ENCODE measurements at regions of chr3 and their contacts with region 1.

Region 1: GRCh38 chr3:52001443-52001974 is 5.8 kb upstream of the RPL29 start:
- DNase-seq: peak; percentile 87
- H3K4me3 Mint-ChIP-seq: no peak overlapping the region
- H3K27ac Mint-ChIP-seq: no peak overlapping the region
- H3K4me1 Mint-ChIP-seq: peaks cover 38% of the 10 kb centered on the region
- H3K27me3 Mint-ChIP-seq: peaks cover 15% of the 10 kb centered on the region
- CTCF ChIP-seq: peak; percentile 98

Region 2: DNA sequence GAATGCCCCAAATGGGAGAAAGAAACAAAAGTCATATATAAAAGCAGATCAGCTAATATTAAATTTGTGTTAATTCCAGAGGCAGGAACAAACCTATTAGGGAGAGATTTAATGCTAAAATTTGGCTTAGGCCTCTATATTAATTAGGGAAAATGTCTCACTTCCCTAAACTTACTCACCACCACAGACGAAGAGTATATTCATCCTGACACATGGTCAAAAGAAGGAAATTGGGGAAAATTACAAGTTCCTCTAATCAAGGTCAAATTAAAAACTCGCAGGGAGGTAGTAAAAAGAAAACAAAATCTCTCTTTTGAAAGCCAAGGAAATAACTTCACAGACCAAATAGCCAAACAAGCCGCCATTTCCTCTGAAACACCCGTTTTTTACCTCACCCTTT is 262.4 kb before region 1 on chr3:
- CTCF ChIA-PET with region 1: no interaction called
- intact Hi-C with region 1: no loop called
- DNase-seq: no peak
- H3K4me3 Mint-ChIP-seq: no peak overlapping the region
- H3K27ac Mint-ChIP-seq: no peak overlapping the region
- H3K4me1 Mint-ChIP-seq: no peaks in the 10 kb centered on the region
- H3K27me3 Mint-ChIP-seq: peaks cover 26% of the 10 kb centered on the region
- CTCF ChIP-seq: no peak

Region 3: GRCh38 chr3:52056968-52057805 is 55.7 kb after region 1 on chr3:
- CTCF ChIA-PET with region 1: interaction called, 4 read pairs
- intact Hi-C with region 1: loop called (anchors 5 kb)
- DNase-seq: peak; percentile 98
- H3K4me3 Mint-ChIP-seq: peak overlapping the region; percentile 80
- H3K27ac Mint-ChIP-seq: peak overlapping the region; percentile 81
- H3K4me1 Mint-ChIP-seq: peaks cover 35% of the 10 kb centered on the region
- H3K27me3 Mint-ChIP-seq: no peaks in the 10 kb centered on the region
- CTCF ChIP-seq: no peak

Region 4: GRCh38 chr3:52123106-52123725 is 121.7 kb after region 1 on chr3:
- CTCF ChIA-PET with region 1: interaction called, 6 read pairs
- intact Hi-C with region 1: loop called (anchors 5 kb)
- DNase-seq: peak; percentile 70
- H3K4me3 Mint-ChIP-seq: no peak overlapping the region
- H3K27ac Mint-ChIP-seq: no peak overlapping the region
- H3K4me1 Mint-ChIP-seq: peaks cover 6% of the 10 kb centered on the region
- H3K27me3 Mint-ChIP-seq: no peaks in the 10 kb centered on the region
- CTCF ChIP-seq: peak; percentile 56

Region 5: GRCh38 chr3:52144034-52144795 is 142.7 kb after region 1 on chr3:
- CTCF ChIA-PET with region 1: interaction called, 5 read pairs
- intact Hi-C with region 1: loop called (anchors 1 kb)
- DNase-seq: peak; percentile 86
- H3K4me3 Mint-ChIP-seq: no peak overlapping the region
- H3K27ac Mint-ChIP-seq: no peak overlapping the region
- H3K4me1 Mint-ChIP-seq: no peaks in the 10 kb centered on the region
- H3K27me3 Mint-ChIP-seq: no peaks in the 10 kb centered on the region
- CTCF ChIP-seq: peak; percentile 94